ENCODE measurements at regions of chr18 and their contacts with region 1.

Region 1: GRCh38 chr18:48445540-48445939 is 36.4 kb upstream of the ZBTB7C start:
- DNase-seq: peak; percentile 83
- H3K4me3 ChIP-seq: no peak overlapping the region
- H3K27ac ChIP-seq: no peak overlapping the region
- H3K4me1 ChIP-seq: peaks cover 5 to 36% (median 19%) of the 10 kb centered on the region in 6 donors
- H3K27me3 ChIP-seq: peaks cover 0 to 28% (median 0%) of the 10 kb centered on the region in 7 donors
- CTCF ChIP-seq: peak; percentile 57 to 94 (median 84)
- POLR2A ChIP-seq: no peak

Region 2: GRCh38 chr18:48022531-48023329 is 422.8 kb before region 1 on chr18:
- intact Hi-C with region 1: loop called (anchors 5 kb)
- DNase-seq: no peak
- H3K4me3 ChIP-seq: no peak overlapping the region
- H3K27ac ChIP-seq: peak overlapping the region in 5 of 8 donors; percentile 55 to 71 (median 68)
- H3K4me1 ChIP-seq: peaks cover 5 to 66% (median 34%) of the 10 kb centered on the region in 6 donors
- H3K27me3 ChIP-seq: peaks cover 0 to 33% (median 0%) of the 10 kb centered on the region in 7 donors
- CTCF ChIP-seq: peak in 10 of 11 experiments; percentile 11 to 68 (median 52)
- POLR2A ChIP-seq: no peak

Region 3: DNA sequence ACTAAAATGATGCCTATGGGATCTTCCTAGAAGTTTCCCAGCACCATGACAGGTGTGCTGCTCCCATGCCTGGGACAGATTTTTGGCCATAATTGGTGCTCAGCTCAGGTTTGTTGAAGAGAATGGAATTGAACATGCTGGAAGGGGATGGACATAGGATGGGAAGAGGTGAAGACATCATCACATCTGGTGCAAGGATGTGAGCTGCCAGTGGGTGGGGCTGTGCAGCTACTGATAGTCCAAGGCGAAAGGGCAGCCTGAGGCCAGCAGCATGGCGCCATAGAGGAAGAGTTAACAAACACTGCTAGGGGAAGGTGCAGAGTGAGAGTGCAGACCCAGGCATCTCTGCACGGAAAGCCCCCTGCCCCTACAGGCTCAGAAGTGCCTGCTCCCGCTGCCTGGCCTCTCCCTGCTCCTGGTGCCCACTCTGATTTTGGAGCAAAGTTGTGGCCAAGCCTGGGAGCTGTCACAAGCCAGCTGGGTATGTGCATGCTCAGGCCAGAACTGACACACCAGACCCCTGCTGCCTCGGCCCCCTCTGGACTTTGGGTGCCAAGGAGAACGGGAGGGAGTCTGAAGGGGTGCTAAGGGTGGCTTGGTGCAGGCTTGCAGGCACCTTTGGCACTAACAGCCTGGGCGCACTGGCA is 214.9 kb before region 1 on chr18:
- intact Hi-C with region 1: loop called (anchors 10 kb)
- DNase-seq: peak; percentile 82
- H3K4me3 ChIP-seq: no peak overlapping the region
- H3K27ac ChIP-seq: peak overlapping the region in 5 of 8 donors; percentile 6 to 80 (median 75)
- H3K4me1 ChIP-seq: peaks cover 17 to 61% (median 38%) of the 10 kb centered on the region in 6 donors
- H3K27me3 ChIP-seq: no peaks in the 10 kb centered on the region
- CTCF ChIP-seq: peak; percentile 11 to 66 (median 40)
- POLR2A ChIP-seq: no peak